Left colon (tissue), 2 donors: ENCODE measurements at regions of chr3 and their contacts with region 1.

Region 1: DNA sequence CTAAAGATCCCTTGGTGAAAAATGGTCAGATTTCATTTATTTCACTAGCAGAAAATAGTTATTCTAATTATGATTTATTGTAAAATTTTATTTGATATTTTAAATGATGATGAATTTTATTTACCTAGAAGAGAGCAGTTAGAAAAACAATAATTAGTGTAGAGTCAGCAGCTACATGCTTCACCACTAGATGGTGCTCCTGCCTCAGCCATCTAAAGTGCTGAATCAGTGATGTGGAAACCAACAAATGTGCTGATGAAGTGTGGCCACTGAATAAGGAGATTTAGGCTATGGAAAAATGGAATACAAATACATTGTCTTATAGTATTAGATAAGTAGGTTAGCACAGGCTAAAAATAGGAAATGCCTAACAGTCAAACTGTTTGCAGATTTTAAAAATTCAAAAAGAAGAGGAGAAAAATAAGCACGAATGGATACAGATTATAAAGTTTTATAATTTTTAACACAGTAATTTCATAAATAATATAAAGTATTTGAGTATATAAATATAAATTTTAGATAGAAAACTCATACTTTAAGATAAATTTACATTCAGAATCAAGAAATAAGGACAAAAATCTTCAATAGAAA is 109.8 kb downstream of the PPP2R3A start:
- DNase-seq: peak; percentile 48 to 69
- ATAC-seq: peak; percentile 86

Region 2: GRCh38 chr3:135878501-135878900 is 196.8 kb before region 1 on chr3:
- intact Hi-C with region 1: no loop called
- DNase-seq: no peak
- ATAC-seq: no peak

Region 3: DNA sequence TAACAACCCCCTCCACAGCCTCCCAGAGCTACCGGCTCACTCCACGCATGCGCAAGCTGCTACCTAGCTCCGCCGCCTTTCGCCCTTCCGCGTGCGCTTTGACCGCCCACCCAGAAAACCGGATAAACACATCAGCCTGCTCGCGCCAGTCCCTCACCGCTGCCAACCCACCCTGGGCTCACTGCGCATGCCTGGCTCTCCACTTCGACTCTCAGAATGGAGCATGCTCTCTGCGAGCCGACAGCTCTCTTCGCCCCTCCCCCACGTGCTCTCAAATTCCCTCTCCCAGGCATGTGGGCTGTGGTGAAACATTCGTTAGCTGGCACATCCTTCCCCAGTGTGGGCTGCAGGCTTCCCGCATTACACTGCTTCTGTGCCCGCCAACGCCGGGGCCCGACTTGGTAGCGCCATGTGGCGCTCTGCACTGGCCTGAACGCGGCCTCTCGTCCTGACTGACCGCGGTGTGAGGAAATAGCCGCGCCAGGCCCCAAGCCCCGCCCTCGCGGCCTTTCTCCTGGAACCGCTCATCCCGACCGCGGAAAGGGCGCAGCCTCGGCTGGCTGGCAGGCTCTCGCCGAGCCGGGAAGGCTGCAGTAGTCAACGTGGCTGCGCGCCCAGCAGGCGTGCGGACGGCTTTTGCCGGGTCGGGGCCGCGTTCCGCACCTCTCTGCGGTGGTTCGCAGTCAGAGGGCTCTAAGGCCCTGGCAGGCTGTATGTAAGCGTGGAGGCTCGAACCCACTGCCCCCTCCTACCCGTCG is 121.3 kb after region 1 on chr3:
- intact Hi-C with region 1: loop called in 1 of 2 experiments (anchors 10 kb)
- DNase-seq: peak; percentile 99 to 100
- ATAC-seq: peak; percentile 77

Region 4: GRCh38 chr3:136250226-136250902 is 175.1 kb after region 1 on chr3 and contains the start of gene PCCB:
- intact Hi-C with region 1: loop called in 1 of 2 experiments (anchors 10 kb)
- DNase-seq: peak; percentile 96
- ATAC-seq: peak; percentile 98
- total RNA-seq, gene PCCB: 53.0 to 59.1 TPM

Region 5: DNA sequence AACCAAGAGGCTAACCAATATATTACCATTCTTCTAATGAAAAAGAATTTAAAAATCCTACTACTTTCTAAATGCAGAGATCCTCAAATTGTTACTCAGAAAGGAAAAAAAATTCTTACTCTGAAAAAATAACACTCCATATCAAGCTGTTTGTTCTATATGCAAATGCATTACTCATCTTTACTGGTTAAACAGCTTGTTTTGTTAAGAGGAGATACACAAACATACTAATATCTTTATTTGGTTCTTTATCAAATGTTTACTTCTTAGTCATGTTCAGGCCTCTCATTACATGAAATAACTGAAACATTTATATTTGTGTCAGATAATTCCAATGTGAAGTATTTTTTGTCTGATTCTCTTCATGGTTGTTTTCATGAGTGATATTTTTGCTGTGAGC is 321.6 kb after region 1 on chr3:
- intact Hi-C with region 1: loop called in 1 of 2 experiments (anchors 10 kb)
- DNase-seq: no peak
- ATAC-seq: no peak